Astrocyte of the cerebellum (primary cell): ENCODE measurements at regions of chr18 and their contacts with region 1.

Region 1: GRCh38 chr18:26073758-26074157 is 16.7 kb downstream of the SS18 start:
- DNase-seq: no peak
- H3K4me3 ChIP-seq: no peak overlapping the region
- CTCF ChIP-seq: no peak

Region 2: GRCh38 chr18:26034850-26035497 is 38.8 kb before region 1 on chr18:
- in situ Hi-C with region 1: loop called (anchors 5 kb)
- DNase-seq: no peak
- H3K4me3 ChIP-seq: no peak overlapping the region
- CTCF ChIP-seq: no peak

Region 3: DNA sequence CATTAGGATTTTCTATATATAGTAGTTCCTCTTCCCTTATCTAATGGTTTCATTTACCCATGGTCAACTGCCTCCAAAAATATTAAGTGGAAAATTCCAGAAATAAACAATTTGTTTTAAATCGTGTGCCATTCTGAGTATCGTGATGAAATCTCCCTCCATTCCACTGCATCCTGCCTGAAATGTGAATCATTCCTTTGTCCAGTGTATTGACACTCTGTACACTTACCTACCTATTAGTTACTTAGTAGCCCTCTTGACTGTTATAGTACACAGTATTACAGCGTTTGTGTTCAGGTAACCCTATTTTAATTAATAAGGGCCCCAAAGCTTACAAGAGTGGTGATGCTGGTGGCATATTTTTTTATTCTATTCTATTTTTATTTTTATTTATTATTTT is 178.7 kb after region 1 on chr18:
- in situ Hi-C with region 1: no loop called
- DNase-seq: no peak
- H3K4me3 ChIP-seq: no peak overlapping the region
- CTCF ChIP-seq: no peak